ENCODE measurements at regions of chr17 and their contacts with region 1.

Region 1: GRCh38 chr17:37818689-37819088 is 73.8 kb upstream of the HNF1B start:
- DNase-seq: no peak
- H3K4me3 ChIP-seq: no peak overlapping the region
- CTCF ChIP-seq: no peak

Region 2: DNA sequence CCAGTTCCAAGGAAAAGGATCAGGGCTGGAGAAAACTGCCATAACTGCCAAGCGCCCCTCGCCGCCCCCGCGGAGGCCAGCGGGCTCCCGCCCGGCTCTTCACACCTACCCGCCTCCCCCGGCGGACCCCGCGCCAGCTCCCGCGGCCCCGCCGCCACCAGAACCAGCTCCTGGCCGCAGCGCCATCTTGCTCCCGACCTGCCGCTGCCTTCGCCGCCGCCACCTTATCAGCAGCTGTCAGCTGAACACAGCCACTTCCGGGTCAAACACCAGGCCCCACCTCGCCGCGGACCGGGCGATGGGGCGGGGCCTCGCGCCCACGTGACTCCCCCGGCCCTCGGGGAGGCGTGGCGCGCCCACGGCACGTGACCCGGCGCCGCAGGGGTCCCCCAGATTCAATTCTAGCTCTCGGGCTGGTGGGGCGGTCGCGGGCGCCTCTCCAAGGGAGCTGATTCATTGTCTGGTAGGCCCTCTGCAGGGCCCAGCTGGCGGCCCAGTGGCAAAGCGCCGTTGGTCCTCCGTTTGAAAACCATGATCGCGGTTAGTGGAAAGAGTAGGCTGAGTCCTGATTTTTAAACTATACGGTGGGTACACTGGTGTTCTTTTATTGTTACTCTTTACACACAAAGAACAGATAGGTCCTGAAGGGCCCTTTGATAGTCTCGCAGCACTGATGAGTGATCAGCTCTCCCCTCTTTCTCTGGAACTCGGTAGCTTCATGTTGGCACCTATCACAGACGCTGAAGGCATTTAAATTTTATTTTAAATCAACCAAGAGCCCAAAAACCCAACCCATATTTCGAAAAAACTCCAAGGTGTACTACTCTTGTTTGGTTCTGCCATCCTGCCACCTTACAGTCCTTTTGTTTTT is 209.3 kb before region 1 on chr17 and contains the start of gene SYNRG:
- CTCF ChIA-PET with region 1: interaction called, 18 read pairs
- POLR2A ChIA-PET with region 1: interaction called, 4 read pairs
- DNase-seq: peak; percentile 57
- H3K4me3 ChIP-seq: peak within 1 kb of the TSS; percentile 87
- CTCF ChIP-seq: peak; percentile 50

Region 3: DNA sequence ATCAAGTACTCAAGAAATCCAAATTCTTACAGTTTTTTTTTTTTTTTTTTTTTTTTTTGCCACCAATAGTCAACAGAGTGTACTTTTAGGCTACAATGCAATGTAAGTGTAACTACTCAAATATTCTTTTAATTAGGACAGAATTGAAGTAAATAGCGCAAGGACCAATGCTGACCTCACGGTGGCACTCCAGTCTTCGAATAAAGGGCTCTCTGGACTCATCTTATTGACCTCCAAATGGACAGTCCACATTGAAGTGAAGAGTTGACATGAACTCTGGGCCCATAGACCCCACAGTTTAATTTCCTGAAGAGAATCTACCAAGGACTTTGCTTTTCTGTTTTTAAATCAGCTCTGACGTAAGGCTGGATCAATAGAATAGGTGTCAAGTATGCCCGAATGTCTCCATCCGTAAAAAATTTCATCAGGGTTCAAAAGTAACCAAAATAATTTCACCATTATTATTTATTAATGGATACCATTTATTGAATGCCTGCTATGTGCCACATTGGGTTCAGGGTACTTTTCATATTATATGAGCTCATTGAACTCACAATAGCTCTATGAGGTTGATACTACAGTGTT is 168.2 kb before region 1 on chr17:
- CTCF ChIA-PET with region 1: interaction called, 169 read pairs
- POLR2A ChIA-PET with region 1: no interaction called
- DNase-seq: no peak
- H3K4me3 ChIP-seq: no peak overlapping the region
- CTCF ChIP-seq: peak; percentile 52

Region 4: GRCh38 chr17:37671824-37672547 is 146.7 kb before region 1 on chr17:
- CTCF ChIA-PET with region 1: interaction called, 18 read pairs
- POLR2A ChIA-PET with region 1: interaction called, 6 read pairs
- DNase-seq: peak; percentile 88
- H3K4me3 ChIP-seq: no peak overlapping the region
- CTCF ChIP-seq: no peak

Region 5: DNA sequence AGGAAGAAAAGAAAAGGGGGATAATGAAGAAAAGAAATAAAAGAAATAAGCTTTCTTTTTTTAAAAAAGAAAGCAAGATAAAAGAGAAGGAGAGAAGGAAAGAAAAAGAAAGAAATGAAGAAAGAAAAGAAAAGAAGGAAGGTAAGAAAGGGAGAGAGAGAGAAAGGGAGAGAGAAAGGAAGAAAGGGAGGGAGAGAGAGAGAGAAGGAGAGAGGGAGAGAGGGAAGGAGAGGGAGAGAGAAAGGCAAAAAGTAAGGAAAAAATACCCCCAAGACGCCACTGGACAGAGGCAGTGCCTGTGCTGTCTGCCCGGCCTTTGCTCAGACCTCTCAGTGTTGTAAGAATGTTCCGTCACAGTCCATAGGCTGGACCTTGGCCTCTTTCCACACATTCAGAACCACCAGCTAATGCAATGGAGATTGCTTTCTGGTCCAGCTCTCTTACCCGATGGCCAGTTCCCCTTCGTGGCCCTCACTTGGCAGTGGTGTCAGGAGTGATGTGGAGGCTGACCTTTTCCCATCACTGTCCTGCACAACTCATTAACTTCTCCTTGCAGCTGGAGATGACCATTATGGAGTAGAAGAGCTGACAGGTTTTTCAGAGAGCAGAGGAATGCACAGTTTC is 59.6 kb before region 1 on chr17:
- CTCF ChIA-PET with region 1: no interaction called
- POLR2A ChIA-PET with region 1: no interaction called
- DNase-seq: no peak
- H3K4me3 ChIP-seq: no peak overlapping the region
- CTCF ChIP-seq: no peak

Region 6: GRCh38 chr17:37791447-37792399 is 27.0 kb before region 1 on chr17:
- CTCF ChIA-PET with region 1: interaction called, 17 read pairs
- POLR2A ChIA-PET with region 1: no interaction called
- DNase-seq: no peak
- H3K4me3 ChIP-seq: no peak overlapping the region
- CTCF ChIP-seq: no peak

Region 7: GRCh38 chr17:37833237-37833859 is 14.7 kb after region 1 on chr17:
- CTCF ChIA-PET with region 1: interaction called, 14 read pairs
- POLR2A ChIA-PET with region 1: no interaction called
- DNase-seq: no peak
- H3K4me3 ChIP-seq: no peak overlapping the region
- CTCF ChIP-seq: no peak